ENCODE measurements at regions of chr16 and their contacts with region 1.

Region 1: DNA sequence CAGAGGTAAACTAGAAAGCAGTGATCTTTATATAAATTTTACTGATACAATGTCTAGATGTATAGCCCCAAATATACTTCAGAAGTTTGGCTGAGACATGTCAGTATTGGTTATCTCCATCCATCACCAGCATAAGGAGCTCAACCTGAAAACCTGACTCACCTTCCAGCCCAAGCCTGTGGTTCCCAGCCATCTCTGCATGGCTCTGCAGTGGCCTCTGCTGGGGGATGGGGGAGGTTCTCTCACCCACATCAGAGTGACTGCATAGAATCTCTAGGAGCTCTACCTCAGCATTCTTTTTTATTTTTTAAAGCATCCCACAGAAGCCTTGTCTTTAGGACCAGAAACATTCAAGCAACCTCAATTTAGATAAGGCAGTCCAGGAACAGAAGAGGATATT is 27.3 kb downstream of the USP7 start:
- DNase-seq: peak; percentile 86
- H3K4me3 Mint-ChIP-seq: no peak overlapping the region
- H3K27ac Mint-ChIP-seq: peak overlapping the region; percentile 64
- H3K4me1 Mint-ChIP-seq: peaks cover 61% of the 10 kb centered on the region
- H3K27me3 Mint-ChIP-seq: no peaks in the 10 kb centered on the region

Region 2: DNA sequence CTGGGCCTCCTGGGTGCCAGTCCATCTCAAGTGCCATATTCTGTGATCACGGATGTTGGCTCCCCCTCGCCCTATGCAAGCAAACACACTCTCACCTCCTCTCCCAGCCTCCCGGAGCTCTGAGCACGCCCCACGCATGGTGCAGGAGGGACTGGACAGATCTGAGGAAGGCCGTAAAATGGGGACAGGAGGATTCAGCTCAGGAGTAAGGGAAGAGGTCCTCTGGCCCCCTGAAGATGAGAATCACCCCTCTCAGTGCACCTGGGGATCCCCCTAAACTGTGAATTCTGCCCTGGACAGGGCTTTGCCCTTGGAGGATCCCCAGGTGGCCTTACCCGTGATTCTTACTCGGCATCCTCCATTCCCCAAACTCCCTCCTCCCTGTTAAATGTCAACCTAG is 154.6 kb before region 1 on chr16:
- CTCF ChIA-PET with region 1: no interaction called
- DNase-seq: no peak
- H3K4me3 Mint-ChIP-seq: no peak overlapping the region
- H3K27ac Mint-ChIP-seq: no peak overlapping the region
- H3K4me1 Mint-ChIP-seq: no peaks in the 10 kb centered on the region
- H3K27me3 Mint-ChIP-seq: no peaks in the 10 kb centered on the region

Region 3: GRCh38 chr16:8920645-8921346 is 15.6 kb before region 1 on chr16:
- CTCF ChIA-PET with region 1: interaction called, 10 read pairs
- DNase-seq: no peak
- H3K4me3 Mint-ChIP-seq: no peak overlapping the region
- H3K27ac Mint-ChIP-seq: peak overlapping the region; percentile 71
- H3K4me1 Mint-ChIP-seq: peaks cover 89% of the 10 kb centered on the region
- H3K27me3 Mint-ChIP-seq: no peaks in the 10 kb centered on the region

Region 4: DNA sequence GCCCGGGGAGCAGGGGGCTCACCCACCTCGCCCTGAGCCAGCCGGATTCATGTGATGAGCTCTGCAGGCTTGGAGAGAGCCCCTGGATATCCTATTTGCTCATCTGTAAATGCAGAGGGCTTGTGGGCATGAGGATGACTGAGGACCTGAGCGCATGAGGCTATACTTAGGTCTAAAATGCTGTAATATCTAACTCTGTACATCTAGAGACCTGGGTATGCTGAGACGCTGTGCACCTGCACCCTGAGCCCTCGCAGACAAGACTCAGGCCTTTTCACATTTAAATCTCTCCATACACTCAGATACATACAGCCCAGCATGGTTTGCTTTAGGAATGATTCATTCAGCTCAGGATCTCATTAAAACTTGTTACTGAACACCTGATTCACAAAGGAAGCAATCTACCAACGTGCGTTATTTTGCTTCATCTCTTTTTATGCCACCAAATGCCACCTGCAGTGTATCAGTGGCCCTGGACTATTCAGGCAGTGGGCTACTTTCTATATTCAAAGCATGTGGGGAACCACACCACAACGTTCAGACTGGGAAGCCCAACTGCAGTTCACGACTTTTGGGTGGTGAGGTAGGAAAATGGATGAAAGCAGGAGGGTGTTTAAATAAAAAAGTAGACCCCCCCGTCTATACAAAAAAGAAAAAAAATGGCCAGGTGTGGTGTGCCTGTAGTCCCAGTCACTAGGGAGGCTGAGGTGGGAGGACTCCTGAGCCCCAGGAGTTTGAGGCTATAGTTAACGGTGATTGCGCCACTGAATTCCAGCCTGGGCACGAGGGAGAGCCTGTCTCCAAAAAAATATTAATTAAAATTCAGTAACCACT is 15.2 kb after region 1 on chr16:
- CTCF ChIA-PET with region 1: interaction called, 17 read pairs
- DNase-seq: no peak
- H3K4me3 Mint-ChIP-seq: no peak overlapping the region
- H3K27ac Mint-ChIP-seq: no peak overlapping the region
- H3K4me1 Mint-ChIP-seq: peaks cover 77% of the 10 kb centered on the region
- H3K27me3 Mint-ChIP-seq: no peaks in the 10 kb centered on the region

Region 5: GRCh38 chr16:8958344-8959167 is 22.1 kb after region 1 on chr16:
- CTCF ChIA-PET with region 1: interaction called, 10 read pairs
- DNase-seq: peak; percentile 52
- H3K4me3 Mint-ChIP-seq: peak overlapping the region; percentile 95
- H3K27ac Mint-ChIP-seq: peak overlapping the region; percentile 94
- H3K4me1 Mint-ChIP-seq: peaks cover 76% of the 10 kb centered on the region
- H3K27me3 Mint-ChIP-seq: no peaks in the 10 kb centered on the region

Region 6: GRCh38 chr16:8982816-8983215 is 46.4 kb after region 1 on chr16:
- CTCF ChIA-PET with region 1: no interaction called
- DNase-seq: no peak
- H3K4me3 Mint-ChIP-seq: no peak overlapping the region
- H3K27ac Mint-ChIP-seq: no peak overlapping the region
- H3K4me1 Mint-ChIP-seq: no peaks in the 10 kb centered on the region
- H3K27me3 Mint-ChIP-seq: peaks cover 5% of the 10 kb centered on the region

Region 7: DNA sequence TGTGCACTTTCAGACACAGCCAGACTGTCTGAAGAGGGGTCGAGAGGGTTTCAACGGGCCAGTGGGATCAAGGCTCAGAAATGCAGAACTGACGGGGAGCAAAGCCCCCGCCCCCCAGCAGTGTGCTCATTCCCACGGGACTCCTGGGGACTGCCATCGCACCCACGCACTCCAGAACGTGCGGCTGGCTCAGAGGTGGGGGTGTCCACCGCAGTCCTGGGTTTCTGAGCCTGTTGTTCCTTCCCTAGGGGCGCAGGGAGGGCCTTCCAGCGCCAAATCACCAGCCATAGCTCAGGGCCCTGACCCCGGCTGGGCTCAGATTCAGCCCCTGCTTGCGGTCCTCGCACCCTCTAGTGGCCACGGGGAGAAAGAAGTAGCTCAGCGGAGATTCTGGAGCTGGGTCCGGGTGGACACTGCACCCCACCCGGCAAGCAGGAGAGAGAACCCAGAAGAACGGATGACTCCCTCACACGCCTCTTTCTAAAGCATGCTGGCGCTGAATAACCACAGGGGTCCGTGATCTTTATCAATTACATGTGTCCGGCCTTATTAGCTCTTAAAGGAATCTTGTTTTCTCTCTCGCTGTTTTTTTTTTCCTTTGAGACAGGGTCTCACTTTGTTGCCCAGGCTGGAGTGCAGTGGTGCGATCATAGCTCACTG is 72.3 kb after region 1 on chr16:
- CTCF ChIA-PET with region 1: interaction called, 20 read pairs
- DNase-seq: peak; percentile 77
- H3K4me3 Mint-ChIP-seq: no peak overlapping the region
- H3K27ac Mint-ChIP-seq: no peak overlapping the region
- H3K4me1 Mint-ChIP-seq: peaks cover 3% of the 10 kb centered on the region
- H3K27me3 Mint-ChIP-seq: peaks cover 45% of the 10 kb centered on the region